ENCODE measurements at regions of chr5 and their contacts with region 1.

Region 1: GRCh38 chr5:120803282-120803681 is 339.2 kb downstream of the PRR16 start:
- DNase-seq: no peak
- H3K4me3 ChIP-seq: no peak overlapping the region
- CTCF ChIP-seq: no peak

Region 2: DNA sequence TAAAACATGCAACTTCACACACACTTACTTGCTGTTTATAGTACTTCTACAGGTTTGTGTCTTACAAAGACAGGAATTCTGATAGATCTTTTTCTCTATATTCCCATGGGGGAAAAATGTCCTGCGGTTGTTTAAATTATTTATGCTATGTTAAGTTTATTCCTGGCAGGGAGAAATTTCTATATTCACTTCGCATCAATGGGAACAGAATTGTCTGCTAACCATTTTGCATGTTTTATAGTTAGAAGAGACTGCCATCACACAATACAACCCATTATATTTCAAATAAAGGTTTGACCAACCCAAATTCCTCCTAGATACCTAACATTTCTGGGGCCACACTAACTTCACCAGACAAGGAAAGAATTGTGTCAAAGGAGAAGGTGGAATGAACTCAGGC is 449.2 kb before region 1 on chr5:
- in situ Hi-C with region 1: no loop called
- DNase-seq: no peak
- H3K4me3 ChIP-seq: no peak overlapping the region
- CTCF ChIP-seq: no peak

Region 3: DNA sequence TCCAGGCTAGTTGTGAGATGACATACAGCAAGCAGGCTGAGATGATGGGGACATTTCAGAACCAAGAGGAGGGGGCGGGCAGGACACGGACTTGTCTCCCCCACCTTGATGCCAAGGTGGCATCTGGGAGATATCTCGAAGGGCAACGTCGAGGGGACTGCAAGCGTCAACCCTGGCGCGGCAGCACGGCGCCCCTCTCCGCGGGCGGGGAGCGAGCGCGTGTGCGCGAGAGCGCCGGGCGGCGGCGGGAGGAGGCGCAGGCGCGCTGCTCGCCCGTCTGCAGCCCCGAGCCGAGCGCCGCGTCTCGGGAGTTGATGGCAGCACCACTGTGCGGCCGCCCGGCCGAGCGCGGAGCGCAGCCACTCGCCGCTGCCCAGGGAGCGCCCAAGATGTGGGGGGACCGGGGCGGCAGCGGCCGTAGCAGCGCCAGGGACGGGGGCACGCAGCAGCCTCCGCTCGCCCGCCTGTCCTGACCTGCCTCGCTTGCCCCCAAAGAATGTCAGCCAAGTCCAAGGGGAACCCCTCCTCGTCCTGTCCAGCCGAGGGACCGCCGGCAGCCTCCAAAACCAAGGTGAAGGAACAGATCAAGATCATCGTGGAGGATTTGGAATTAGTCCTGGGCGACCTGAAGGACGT is 339.2 kb before region 1 on chr5 and contains the start of gene PRR16:
- in situ Hi-C with region 1: loop called (anchors 10 kb)
- DNase-seq: no peak
- H3K4me3 ChIP-seq: peak within 1 kb of the TSS; percentile 96
- CTCF ChIP-seq: no peak

Region 4: GRCh38 chr5:120717381-120717780 is 85.9 kb before region 1 on chr5:
- in situ Hi-C with region 1: no loop called
- DNase-seq: no peak
- H3K4me3 ChIP-seq: no peak overlapping the region
- CTCF ChIP-seq: no peak

Region 5: DNA sequence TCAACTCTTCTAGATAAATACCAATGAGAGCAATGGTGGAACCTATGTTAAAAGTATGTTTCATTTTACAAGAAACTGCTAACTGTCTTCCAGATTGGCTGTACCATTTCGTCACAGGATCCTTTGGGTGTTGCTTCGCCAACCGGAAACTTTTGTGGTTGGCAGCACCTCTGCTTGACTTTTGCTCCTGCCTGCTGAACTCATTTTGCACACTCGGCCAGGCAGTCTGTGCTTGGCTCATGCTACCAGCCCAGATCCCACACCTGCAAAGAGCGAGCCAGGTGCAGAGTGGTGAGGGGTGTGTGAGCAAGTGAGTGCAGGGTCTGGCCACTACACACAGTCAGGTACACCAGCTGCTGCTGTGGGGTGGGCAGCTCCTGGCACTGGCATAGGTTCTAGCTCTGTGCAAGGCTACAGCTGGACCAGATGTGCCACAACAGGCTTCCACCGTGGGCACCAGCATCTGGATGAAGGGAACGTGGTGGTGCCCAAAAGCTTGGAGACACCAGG is 83.1 kb after region 1 on chr5:
- in situ Hi-C with region 1: no loop called
- DNase-seq: no peak
- H3K4me3 ChIP-seq: no peak overlapping the region
- CTCF ChIP-seq: no peak

Region 6: DNA sequence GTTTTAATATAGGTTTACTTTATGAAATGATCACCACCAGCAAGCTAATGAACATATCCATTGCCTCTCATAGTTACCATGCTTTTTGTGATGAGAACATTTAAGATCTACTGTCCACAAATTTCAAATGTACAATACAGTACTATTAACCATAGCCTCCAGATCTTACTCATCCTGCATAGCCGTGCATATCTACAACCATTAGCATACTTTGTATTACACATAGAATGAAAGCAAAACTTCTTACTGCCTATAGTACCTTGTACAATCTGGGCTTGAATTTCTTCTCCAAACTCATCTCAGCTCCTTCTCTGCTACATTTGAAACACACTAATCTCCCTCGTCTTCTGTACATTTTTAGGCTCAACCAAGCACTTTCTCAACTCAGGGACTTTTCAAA is 171.4 kb after region 1 on chr5:
- in situ Hi-C with region 1: no loop called
- DNase-seq: no peak
- H3K4me3 ChIP-seq: no peak overlapping the region
- CTCF ChIP-seq: no peak

Measured in astrocyte of the cerebellum (primary cell).